ENCODE measurements at regions of chr2 and their contacts with region 1.

Region 1: GRCh38 chr2:101776172-101777043 is 78.9 kb downstream of the MAP4K4 start:
- DNase-seq: peak in 1 of 10 donors; percentile 81

Region 2: DNA sequence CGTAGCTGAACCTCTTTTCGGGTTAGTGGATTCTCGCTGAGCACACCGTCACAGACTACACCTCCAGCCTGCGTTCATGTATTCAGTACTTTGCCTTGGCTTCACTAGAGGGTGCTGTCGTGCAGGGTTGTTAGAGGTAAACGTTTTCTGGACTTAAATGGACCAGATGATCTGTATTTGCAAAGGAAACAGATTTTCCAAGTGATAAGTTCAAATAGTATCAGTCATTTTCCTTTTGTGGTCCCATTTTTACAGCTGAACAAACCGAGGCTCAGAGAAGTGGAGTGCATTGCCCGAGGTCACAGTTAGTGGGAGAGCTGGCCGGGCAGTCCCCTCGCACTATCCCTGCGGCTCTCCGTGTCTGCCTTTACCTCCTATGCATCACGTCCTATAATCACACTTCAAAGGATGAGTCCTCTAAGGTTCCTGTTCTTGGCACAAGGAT is 47.0 kb after region 1 on chr2:
- intact Hi-C with region 1: loop called (anchors 5 kb)
- DNase-seq: peak in 6 of 10 donors; percentile 40 to 84 (median 62)

Region 3: DNA sequence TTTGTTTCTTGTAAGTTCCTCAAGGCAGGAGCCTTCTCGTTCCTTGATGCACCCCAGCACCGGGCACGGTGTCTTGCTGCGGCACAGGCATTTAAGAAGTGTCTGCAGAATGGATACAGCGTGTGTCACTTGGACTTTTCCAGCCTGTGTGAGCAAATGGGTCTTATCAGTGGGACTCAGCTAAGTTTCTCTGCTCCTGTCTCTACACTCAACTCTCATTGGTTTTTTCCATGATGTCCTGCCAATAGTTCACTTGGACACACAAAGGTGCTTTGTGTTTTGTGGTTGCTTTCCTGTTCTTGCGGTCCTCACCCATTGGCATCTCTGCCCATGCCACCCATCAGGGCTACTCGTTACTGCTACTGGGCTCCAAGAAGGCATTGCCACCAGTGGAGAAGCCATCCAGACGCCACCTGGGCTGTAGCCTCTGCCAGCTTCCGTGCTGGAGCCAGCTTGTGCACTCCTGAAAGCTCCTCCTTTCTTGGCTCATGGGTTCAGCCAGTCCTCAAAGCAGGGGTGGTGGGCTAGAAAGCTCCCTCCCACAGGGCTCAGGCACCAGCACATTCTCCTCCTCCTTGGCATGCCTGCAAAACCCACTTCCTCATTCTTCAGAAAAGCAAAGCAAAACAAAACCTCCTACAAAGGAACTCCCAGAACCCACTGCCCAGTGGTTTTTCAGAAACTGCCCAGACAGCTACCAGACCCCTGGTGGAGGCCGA is 256.8 kb after region 1 on chr2:
- intact Hi-C with region 1: no loop called
- DNase-seq: peak in 2 of 10 donors; percentile 8 to 84

Region 4: DNA sequence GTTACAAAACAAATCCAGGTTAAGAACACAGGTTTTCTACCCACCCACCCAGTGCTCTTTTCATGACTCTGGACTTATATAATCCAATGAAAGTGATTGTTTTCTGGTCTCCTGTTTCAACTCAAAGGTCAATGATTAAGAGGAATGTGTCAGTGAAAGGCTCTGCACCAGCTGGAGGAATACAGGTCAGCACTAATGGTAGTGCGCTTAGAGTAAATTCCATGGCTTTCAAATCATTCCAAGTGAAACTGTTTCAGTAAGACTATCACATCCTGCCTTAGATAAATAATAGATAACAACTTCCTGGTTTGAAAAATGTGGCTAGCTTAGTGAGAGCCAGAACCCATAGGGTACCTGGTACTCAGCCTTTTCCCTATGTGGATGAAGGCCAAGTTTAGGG is 744.4 kb after region 1 on chr2:
- intact Hi-C with region 1: no loop called
- DNase-seq: no peak